Right ventricle myocardium superior (tissue), 1 donor: ENCODE measurements at regions of chr19 and their contacts with region 1.

Region 1: DNA sequence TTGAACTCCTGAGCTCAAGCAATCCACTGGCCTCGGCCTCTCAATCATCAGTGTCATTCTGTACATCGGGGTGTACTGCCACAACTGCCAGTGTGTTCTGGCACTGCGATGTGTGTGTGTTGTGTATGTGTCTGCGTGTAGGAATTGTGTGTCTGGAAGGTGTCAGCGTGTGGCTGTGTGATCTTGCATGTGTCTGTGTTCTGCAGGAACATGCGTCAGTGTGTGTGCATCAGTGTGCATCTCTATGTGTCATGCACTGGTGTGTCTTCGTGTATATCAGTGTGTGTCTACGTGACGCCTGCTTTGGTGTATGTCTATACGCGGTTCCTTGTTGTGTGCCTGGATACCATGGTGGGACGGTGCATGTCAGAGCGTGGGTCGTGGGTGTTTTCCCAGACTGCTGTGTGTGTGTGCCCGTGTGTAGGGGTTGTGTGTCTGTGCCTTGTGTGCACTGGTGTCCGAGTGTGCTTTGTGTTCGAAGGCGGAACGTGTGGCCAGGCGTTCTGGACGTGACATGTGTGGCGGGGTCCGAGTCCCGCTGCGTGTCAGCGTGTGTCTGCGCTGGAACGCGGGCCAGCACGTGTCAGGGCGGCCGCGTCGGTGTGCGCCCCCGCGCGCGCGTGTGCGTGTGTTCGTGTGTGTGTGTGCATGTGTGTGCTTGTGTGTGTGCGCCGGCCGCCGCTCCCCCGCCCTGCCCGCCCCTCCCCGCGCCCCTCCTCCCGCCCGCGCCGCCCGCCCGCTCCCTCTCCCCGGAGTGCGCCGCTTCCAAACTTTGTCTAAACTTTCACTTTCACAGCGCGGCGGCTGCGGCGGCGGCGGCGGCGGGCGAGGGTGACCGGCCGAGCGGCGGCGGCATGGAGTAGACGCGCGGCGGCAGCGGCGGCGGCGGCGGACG is at the start of gene NFIX:
- DNase-seq: peak; percentile 81
- ATAC-seq: peak; percentile 56
- total RNA-seq, gene NFIX: 160 TPM

Region 2: DNA sequence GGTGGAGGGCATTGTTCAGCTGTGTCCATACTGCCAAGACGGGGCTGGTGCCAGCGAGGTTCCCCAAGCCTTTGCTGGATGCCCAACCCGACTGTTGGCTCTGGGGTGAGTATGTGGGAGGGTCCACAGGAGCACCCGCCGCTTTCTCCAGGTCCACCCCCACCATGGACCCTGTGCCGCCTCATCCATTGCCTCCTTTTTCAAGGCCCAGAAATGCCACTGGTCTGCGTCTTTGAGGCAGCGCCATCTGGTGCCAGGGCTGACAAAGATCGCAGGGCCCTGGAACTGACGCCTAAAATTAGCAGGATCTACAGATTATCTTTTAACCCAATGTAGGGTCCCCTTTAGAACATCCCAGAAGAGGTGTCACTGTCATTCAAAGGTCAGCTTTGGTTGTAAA is 34.9 kb after region 1 on chr19:
- intact Hi-C with region 1: loop called (anchors 5 kb)
- DNase-seq: no peak
- ATAC-seq: no peak

Region 3: GRCh38 chr19:13055213-13056051 is 60.5 kb after region 1 on chr19:
- intact Hi-C with region 1: loop called (anchors 5 kb)
- DNase-seq: peak; percentile 90
- ATAC-seq: peak; percentile 52